Right lobe of liver (tissue), 6 donors: ENCODE measurements at regions of chr4 and their contacts with region 1.

Region 1: DNA sequence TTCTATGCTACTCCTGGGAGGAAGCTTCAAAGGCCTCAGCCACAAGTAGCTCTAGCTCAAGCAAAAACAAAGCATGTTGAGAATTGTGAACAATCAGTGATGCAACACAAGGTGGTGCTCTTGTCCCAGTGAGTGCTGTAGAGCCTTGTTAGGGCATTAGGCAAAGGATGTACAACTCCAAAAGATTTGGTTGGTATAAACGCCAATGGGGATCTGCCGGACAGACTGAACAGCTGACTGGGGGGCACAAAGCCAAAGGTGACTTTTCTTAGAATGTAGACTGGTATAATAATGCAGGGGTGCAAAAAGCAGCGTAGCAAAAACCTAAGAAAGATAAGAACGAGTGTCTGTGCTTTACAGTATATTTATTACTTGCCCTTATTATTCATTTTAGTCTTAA is 62.6 kb upstream of the ALB start:
- DNase-seq: peak in 2 of 3 donors; percentile 25 to 79
- ATAC-seq: peak; percentile 72 to 88 (median 74)
- H3K4me3 ChIP-seq: peak overlapping the region in 2 of 3 donors; percentile 22 to 26
- H3K27ac ChIP-seq: peak overlapping the region in 2 of 3 donors; percentile 84 to 90
- H3K4me1 ChIP-seq: peaks cover 0 to 24% (median 5%) of the 10 kb centered on the region in 4 donors
- H3K27me3 ChIP-seq: no peaks in the 10 kb centered on the region
- CTCF ChIP-seq: peak; percentile 64 to 82 (median 76)
- POLR2A ChIP-seq: peak; percentile 21

Region 2: DNA sequence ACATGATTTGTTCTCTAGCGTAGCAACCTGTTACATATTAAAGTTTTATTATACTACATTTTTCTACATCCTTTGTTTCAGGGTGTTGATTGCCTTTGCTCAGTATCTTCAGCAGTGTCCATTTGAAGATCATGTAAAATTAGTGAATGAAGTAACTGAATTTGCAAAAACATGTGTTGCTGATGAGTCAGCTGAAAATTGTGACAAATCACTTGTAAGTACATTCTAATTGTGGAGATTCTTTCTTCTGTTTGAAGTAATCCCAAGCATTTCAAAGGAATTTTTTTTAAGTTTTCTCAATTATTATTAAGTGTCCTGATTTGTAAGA is 65.1 kb after region 1 on chr4:
- intact Hi-C with region 1: loop called in 1 of 2 experiments (anchors 10 kb)
- DNase-seq: no peak
- ATAC-seq: no peak
- H3K4me3 ChIP-seq: peak overlapping the region; percentile 35 to 68 (median 52)
- H3K27ac ChIP-seq: peak overlapping the region; percentile 45 to 91 (median 82)
- H3K4me1 ChIP-seq: peaks cover 0 to 28% (median 7%) of the 10 kb centered on the region in 4 donors
- H3K27me3 ChIP-seq: no peaks in the 10 kb centered on the region
- CTCF ChIP-seq: no peak
- POLR2A ChIP-seq: no peak